HepG2 (cell line): ENCODE measurements at regions of chr10 and their contacts with region 1.

Region 1: DNA sequence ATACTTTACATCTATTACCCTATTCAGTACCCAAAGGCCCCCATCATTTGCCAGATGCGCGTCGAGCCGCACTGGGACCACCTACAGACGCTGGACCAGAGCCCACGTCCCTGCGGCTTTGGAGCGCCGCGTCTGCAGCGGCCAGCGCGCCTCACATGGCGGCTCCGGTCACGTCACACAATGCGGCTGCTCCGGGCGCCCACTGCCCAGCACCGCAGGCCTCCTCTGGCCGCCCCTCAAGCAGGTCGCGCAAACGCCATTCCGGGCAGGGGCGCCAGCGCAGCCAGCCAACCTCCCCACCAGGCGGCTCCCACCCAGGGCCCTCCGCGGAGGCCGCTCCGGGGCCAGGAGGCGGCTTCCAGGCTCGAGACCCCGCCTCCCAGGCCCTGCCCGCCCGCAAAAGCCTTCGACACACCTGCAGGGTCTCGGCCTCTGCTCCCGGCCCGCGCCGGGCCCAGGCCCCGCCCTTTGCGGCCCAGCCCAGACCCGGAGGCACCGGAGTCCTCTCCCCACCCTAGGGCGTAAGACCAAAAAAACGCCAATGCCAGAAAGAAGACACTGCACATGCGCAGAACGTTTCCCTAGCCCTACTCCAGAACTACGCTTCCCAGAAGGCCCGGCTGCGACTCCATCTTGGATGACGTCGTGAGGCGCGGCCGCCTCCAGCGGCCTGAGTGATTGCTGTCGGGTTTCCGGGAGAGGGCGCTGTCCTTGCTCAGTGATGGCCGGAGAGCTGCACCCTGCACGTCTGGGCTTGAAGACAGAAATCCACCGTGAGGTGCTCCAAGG is at the start of gene ZNF25:
- DNase-seq: peak; percentile 99
- ATAC-seq: peak; percentile 97
- H3K4me3 ChIP-seq: peak within 1 kb of the TSS; percentile 66 to 90 (median 80)
- H3K27ac ChIP-seq: peak within 1 kb of the TSS; percentile 84
- H3K4me1 ChIP-seq: peaks cover 10% of the 10 kb centered on the region
- H3K27me3 ChIP-seq: no peaks in the 10 kb centered on the region
- CTCF ChIP-seq: peak; percentile 98
- EP300 ChIP-seq: peak in 1 of 2 experiments; percentile 32; a peak in 1 of 4 replicates
- POLR2A ChIP-seq: peak; percentile 77 to 91
- RAD21 ChIP-seq: peak; percentile 53
- total RNA-seq, gene ZNF25: 1.4 and 1.6 TPM in 2 replicates

Region 2: GRCh38 chr10:37680716-37681616 is 295.3 kb before region 1 on chr10:
- CTCF ChIA-PET with region 1: no interaction called
- POLR2A ChIA-PET with region 1: no interaction called
- in situ Hi-C with region 1: no loop called
- intact Hi-C with region 1: no loop called
- DNase-seq: no peak
- ATAC-seq: no peak
- H3K4me3 ChIP-seq: no peak overlapping the region
- H3K27ac ChIP-seq: no peak overlapping the region
- H3K4me1 ChIP-seq: no peaks in the 10 kb centered on the region
- H3K27me3 ChIP-seq: no peaks in the 10 kb centered on the region; a peak in 1 of 5 replicates
- CTCF ChIP-seq: no peak
- EP300 ChIP-seq: no peak
- POLR2A ChIP-seq: no peak
- RAD21 ChIP-seq: no peak

Region 3: GRCh38 chr10:37857287-37858211 is 118.7 kb before region 1 on chr10 and contains the start of gene ZNF248:
- CTCF ChIA-PET with region 1: no interaction called
- POLR2A ChIA-PET with region 1: interaction called, 3 read pairs
- in situ Hi-C with region 1: no loop called
- intact Hi-C with region 1: loop called (anchors 5 kb)
- DNase-seq: peak; percentile 93
- ATAC-seq: peak; percentile 96
- H3K4me3 ChIP-seq: peak within 1 kb of the TSS; percentile 71 to 91 (median 73)
- H3K27ac ChIP-seq: peak within 1 kb of the TSS; percentile 98
- H3K4me1 ChIP-seq: peaks cover 53% of the 10 kb centered on the region
- H3K27me3 ChIP-seq: no peaks in the 10 kb centered on the region; a peak in 2 of 5 replicates
- CTCF ChIP-seq: peak; percentile 36; the same call in 1 of the 2 replicates
- EP300 ChIP-seq: no peak
- POLR2A ChIP-seq: peak; percentile 98 to 99
- RAD21 ChIP-seq: peak; percentile 45
- total RNA-seq, gene ZNF248: 12.5 and 12.8 TPM in 2 replicates

Region 4: DNA sequence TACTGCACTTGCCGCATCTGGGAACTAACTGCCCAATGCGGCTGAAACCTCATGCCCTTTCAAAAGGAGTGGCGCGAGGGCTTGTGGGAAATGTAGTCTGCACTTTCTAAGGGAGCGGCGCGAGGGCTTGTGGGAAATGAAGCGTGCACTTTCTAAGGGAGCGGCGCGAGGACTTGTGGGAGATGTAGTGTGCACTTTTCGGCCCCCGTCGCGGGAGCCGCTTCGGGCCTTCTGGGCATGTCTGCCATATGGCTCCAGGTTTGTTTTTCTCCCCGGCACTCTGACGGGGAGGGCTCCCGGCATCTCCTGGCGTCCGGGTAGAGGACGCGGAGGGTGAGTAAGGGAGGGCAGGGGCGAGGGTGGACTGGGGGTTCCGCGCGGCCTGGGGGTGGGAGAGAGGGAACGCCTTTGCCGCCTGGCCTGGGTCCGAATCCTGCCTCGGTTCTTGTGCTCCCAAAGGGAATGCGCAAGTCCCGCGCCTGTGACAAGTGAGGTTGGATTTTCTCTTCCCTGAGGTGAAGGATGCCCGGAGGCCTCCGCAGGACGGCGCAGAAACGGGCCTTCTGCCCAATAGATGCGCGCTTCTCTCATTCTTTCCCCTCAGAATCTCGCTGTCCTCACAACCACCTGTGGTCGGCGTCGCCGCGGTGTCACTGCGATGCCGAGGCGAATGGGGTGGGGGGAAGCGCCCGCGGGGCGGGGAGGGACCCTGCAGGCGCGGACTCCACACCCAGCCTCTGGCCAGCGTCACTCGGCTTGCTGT is 118.1 kb after region 1 on chr10 and contains the start of gene ZNF37A:
- CTCF ChIA-PET with region 1: no interaction called
- POLR2A ChIA-PET with region 1: no interaction called
- in situ Hi-C with region 1: no loop called
- intact Hi-C with region 1: loop called (anchors 1 kb)
- DNase-seq: peak; percentile 94
- ATAC-seq: peak; percentile 98
- H3K4me3 ChIP-seq: peak within 1 kb of the TSS; percentile 77 to 92 (median 80)
- H3K27ac ChIP-seq: peak within 1 kb of the TSS; percentile 75
- H3K4me1 ChIP-seq: peaks cover 43% of the 10 kb centered on the region
- H3K27me3 ChIP-seq: no peaks in the 10 kb centered on the region; a peak in 1 of 5 replicates
- CTCF ChIP-seq: peak; percentile 11; the same call in 1 of the 2 replicates
- EP300 ChIP-seq: no peak
- POLR2A ChIP-seq: peak; percentile 62 to 64
- RAD21 ChIP-seq: 0 out of 2 replicates have a peak, but pooled peaks have one; percentile 24
- total RNA-seq, gene ZNF37A: 12.6 and 17.0 TPM in 2 replicates